ENCODE measurements at regions of chr3 and their contacts with region 1.

Region 1: GRCh38 chr3:140910860-140911259 is 30.8 kb upstream of the SLC25A36 start:
- DNase-seq: no peak
- H3K4me3 ChIP-seq: no peak overlapping the region
- H3K27ac ChIP-seq: no peak overlapping the region
- H3K4me1 ChIP-seq: no peaks in the 10 kb centered on the region
- H3K27me3 ChIP-seq: peaks cover 0 to under 1% of the 10 kb centered on the region in 2 donors
- CTCF ChIP-seq: no peak

Region 2: DNA sequence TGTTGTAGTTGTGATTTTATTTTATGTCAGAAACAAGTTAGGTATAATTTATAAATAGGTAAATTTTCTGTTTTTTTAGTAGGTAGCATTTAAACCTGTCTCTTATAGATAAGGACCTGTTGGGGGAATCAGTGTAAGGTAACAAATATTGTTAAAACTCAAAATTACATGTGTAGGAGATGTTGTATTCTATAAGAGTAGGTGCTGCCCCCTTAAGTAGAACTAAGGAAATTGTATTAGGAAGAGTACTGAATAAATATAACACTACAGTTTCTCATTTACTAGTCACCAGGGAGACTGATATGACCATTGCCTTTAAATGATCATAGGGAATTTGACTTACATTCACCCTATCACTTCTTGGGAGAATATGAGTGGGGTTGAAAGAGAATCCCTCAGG is 62.0 kb after region 1 on chr3:
- intact Hi-C with region 1: loop called (anchors 10 kb)
- DNase-seq: no peak
- H3K4me3 ChIP-seq: no peak overlapping the region
- H3K27ac ChIP-seq: no peak overlapping the region
- H3K4me1 ChIP-seq: no peaks in the 10 kb centered on the region
- H3K27me3 ChIP-seq: no peaks in the 10 kb centered on the region
- CTCF ChIP-seq: no peak

Region 3: GRCh38 chr3:141184430-141184829 is 273.6 kb after region 1 on chr3:
- intact Hi-C with region 1: loop called (anchors 10 kb)
- DNase-seq: no peak
- H3K4me3 ChIP-seq: no peak overlapping the region
- H3K27ac ChIP-seq: no peak overlapping the region
- H3K4me1 ChIP-seq: no peaks in the 10 kb centered on the region
- H3K27me3 ChIP-seq: no peaks in the 10 kb centered on the region
- CTCF ChIP-seq: no peak

Region 4: DNA sequence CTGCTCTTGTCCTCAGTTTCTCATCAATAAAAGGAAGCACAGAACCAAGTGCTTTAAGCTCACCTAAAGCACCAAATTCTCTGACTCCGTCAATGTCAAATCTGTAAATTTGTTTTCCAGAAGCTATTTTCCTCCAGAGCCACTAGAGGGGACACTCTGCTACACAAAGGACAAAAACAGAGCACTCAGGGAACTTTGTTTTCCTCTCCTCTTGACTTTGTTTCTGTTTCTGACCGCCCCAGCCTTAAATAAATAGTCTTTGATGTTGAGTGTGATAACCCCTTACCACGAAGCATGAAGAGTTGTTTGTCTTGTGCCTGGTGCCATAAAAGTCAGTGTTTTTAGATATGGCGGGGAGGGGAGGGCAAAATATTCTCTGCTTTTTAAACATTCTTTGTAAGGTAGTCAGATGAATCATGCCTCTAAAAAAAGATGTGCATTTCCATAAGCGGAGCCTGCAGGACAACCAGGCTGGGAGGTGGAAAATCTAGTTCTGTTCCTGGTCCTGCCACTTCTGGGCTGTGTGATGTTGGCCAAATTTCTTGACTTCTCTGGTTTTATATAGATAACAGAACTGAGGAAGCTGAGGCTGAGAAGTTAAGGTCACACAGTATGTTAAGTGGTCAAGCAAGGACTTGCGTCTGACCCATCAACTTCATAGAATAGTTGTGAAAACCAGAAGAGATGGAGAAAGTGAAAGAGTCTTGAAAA is 450.2 kb after region 1 on chr3:
- intact Hi-C with region 1: no loop called
- DNase-seq: no peak
- H3K4me3 ChIP-seq: peak overlapping the region in 1 of 2 donors; percentile 9
- H3K27ac ChIP-seq: peak overlapping the region; percentile 71 to 76
- H3K4me1 ChIP-seq: peaks cover 0 to 15% (median 13%) of the 10 kb centered on the region in 4 donors
- H3K27me3 ChIP-seq: no peaks in the 10 kb centered on the region
- CTCF ChIP-seq: peak; percentile 85 to 89